Activated CD4-positive, alpha-beta T cell treated with anti-CD3 and anti-CD28 coated beads, Interleukin-2, amount 10 ng/mL, durations not matched to agents 24 days and 14 days (primary cell): ENCODE measurements at regions of chr18 and their contacts with region 1.

Region 1: DNA sequence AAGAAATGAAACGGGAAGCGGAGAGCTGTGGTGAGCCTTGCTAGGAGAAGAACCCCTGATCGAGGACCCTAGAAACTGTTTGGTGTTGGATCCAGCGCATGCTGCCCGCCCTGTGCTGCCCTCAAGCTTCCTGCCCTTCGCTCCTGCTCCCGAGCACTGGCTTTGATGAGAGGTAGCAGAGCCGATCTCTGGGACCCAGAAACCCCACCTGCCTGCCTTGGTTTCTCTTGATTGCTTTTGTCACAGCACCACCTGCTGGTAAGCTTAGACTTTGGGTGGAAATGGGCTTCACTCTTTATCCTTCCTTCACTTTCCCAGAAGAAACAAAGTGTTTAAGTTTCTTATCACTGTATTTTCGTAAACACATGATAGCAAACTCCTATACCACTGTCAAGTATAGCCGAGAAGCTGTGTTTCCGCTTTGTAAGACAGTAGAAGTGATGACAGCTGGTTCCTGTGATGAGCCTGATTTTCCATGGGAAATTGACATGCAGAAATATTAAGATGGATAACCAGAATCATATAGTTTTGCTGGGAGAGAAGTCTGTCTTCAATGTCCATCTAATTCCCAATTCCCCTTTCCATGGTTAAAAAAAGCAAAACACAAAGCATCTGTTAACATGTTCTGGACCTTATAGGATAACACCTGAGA is 267.4 kb downstream of the PHLPP1 start:
- DNase-seq: peak; percentile 88
- H3K4me3 Mint-ChIP-seq: no peak overlapping the region
- H3K27ac Mint-ChIP-seq: no peak overlapping the region
- H3K4me1 Mint-ChIP-seq: peaks cover 6% of the 10 kb centered on the region
- H3K27me3 Mint-ChIP-seq: no peaks in the 10 kb centered on the region

Region 2: DNA sequence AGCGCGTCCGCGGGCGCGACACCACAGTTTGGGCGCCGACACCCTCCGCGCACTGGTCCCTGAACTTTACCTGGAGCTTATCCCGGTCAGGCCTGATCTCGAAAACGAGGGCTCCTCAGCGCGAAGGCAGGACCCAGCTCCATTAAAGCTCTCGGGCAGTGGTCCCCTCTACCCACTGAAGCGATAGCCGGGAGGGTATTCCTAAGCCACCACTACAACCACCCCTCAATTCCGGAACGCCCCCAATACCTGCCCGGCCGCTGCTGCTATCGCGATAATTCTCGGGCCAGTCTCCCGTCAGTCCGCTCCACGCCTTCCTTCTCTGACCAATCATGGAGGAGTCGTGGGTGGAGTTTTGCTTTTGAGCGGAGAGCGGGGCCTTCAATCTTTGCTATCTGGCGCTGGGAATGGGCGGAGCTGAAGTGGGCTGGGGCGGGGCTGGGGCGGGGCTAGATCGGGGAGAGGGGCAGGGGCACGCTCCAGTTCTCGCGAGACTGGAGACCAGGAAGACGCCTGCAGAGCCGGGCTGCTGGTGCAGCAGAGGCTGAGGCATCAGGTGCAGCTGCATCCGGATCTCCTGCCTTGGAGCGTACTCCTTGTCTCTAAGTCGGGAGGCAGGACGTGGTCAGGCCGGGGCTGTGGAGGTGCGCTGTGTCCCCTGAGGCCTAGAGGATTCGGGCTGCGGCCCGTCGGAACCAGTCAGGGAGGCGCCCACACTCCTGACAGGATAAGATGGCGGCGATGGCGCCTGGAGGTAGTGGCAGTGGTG is 795.8 kb before region 1 on chr18 and contains the starts of genes PIGN and RELCH:
- intact Hi-C with region 1: loop called (anchors 5 kb)
- DNase-seq: peak; percentile 98
- H3K4me3 Mint-ChIP-seq: peak within 1 kb of the TSS; percentile 100
- H3K27ac Mint-ChIP-seq: peak within 1 kb of the TSS; percentile 97
- H3K4me1 Mint-ChIP-seq: peaks cover 42% of the 10 kb centered on the region
- H3K27me3 Mint-ChIP-seq: no peaks in the 10 kb centered on the region
- total RNA-seq, gene PIGN: 32.0 and 33.9 TPM in 2 replicates
- total RNA-seq, gene RELCH: 30.6 and 31.1 TPM in 2 replicates

Region 3: DNA sequence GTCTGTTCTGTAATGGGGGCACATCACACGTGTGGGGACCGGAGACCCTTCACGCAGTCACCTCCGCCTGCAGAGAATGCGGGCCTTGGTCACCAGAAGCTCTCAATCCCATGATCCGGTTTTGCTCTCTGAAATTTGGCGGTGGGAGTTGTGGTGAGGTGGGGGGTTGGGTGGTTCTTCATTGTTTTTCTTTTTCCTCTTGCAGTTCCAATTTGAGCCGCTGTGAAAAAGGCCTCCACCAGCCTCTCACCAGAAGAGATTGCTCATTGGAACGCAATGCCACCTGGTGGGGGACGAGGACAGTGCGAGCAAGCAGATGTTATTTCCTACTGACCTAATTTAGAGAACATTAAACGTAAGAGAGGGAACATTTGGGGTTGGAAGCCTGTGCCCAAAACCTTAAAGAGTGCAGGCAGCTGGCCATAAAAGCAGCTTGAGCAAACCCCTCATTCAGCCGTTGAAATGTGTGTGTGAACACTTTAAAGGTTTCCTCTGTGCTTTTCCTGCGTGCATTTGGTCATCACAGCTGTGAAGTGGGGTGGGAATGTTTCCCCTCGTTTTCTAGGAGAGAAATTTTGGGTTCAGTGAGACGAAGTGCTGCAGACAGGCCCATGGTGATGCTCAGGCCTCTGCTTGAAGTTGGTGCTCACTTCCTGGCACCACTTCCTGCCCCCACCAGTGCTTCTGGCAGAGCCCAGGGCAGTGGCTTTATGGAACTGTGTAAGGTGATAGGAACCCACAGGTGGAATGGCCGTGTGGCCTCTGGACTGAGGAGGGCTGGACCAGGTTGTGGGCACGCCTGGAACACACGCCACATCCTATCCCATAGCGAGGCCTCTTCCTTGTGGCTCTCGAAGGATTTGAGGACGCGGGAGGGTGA is 398.2 kb before region 1 on chr18:
- intact Hi-C with region 1: loop called (anchors 2 kb)
- DNase-seq: peak; percentile 94
- H3K4me3 Mint-ChIP-seq: peak overlapping the region; percentile 59
- H3K27ac Mint-ChIP-seq: peak overlapping the region; percentile 82
- H3K4me1 Mint-ChIP-seq: peaks cover 40% of the 10 kb centered on the region
- H3K27me3 Mint-ChIP-seq: no peaks in the 10 kb centered on the region

Region 4: GRCh38 chr18:62637807-62638687 is 344.7 kb before region 1 on chr18:
- intact Hi-C with region 1: loop called (anchors 1 kb)
- DNase-seq: peak; percentile 85
- H3K4me3 Mint-ChIP-seq: no peak overlapping the region
- H3K27ac Mint-ChIP-seq: no peak overlapping the region
- H3K4me1 Mint-ChIP-seq: peaks cover 7% of the 10 kb centered on the region
- H3K27me3 Mint-ChIP-seq: peaks cover 15% of the 10 kb centered on the region

Region 5: GRCh38 chr18:62898359-62898758 is 84.4 kb before region 1 on chr18:
- intact Hi-C with region 1: no loop called
- DNase-seq: no peak
- H3K4me3 Mint-ChIP-seq: no peak overlapping the region
- H3K27ac Mint-ChIP-seq: no peak overlapping the region
- H3K4me1 Mint-ChIP-seq: peaks cover 8% of the 10 kb centered on the region
- H3K27me3 Mint-ChIP-seq: no peaks in the 10 kb centered on the region

Region 6: GRCh38 chr18:62954366-62954765 is 28.4 kb before region 1 on chr18:
- intact Hi-C with region 1: no loop called
- DNase-seq: no peak
- H3K4me3 Mint-ChIP-seq: no peak overlapping the region
- H3K27ac Mint-ChIP-seq: no peak overlapping the region
- H3K4me1 Mint-ChIP-seq: peaks cover 14% of the 10 kb centered on the region
- H3K27me3 Mint-ChIP-seq: no peaks in the 10 kb centered on the region